ENCODE measurements at regions of chr20 and their contacts with region 1.

Region 1: GRCh38 chr20:44609511-44610312 is 27.3 kb downstream of the PKIG start:
- DNase-seq: peak; percentile 90 to 93
- H3K4me3 ChIP-seq: peak overlapping the region; percentile 28 to 38
- H3K27ac ChIP-seq: peak overlapping the region; percentile 86
- H3K4me1 ChIP-seq: peaks cover 0 to 55% (median 34%) of the 10 kb centered on the region in 4 donors
- H3K27me3 ChIP-seq: no peaks in the 10 kb centered on the region
- CTCF ChIP-seq: peak; percentile 98

Region 2: DNA sequence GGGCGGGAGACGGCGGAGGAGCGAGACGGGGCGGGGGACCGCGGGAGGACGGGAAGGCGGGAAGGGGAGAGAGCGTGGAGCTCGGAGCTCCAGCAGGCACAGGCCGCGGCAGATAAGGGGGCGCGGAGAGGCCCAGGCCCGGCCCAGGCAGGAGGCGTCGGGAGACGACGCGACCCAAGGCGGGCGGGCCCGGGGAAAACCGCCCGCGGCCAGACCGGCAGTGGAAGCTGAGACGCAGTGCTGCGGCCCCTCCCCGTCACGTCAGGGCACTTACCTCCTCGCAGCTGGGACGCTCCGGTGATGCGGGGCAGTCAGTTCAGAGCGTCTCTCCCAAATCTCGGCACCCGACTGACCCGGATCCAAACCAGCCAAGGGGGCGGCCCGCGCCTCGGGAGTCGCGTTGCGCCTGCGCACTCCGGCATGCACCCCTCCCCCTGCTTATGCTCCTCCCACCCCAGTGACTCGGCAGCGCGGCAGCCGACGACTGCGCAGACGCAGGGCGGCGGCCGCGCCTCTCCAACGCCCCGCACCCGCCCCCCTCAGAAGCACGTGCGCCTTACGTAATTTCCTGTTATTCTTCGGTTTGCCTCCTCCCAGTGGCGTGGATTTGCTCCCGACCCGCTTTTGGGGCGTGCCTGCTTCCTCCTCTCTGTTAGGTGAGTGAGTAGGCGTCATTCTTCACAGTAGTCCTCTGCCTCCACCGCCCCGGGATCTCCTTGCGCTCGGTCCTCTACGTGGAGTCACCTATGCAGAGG is 399.1 kb before region 1 on chr20 and contains the start of gene OSER1:
- intact Hi-C with region 1: loop called (anchors 10 kb)
- DNase-seq: peak; percentile 98 to 99
- H3K4me3 ChIP-seq: peak within 1 kb of the TSS; percentile 78 to 98
- H3K27ac ChIP-seq: peak within 1 kb of the TSS; percentile 96 to 99
- H3K4me1 ChIP-seq: peaks cover 0 to 52% (median 32%) of the 10 kb centered on the region in 4 donors
- H3K27me3 ChIP-seq: no peaks in the 10 kb centered on the region
- CTCF ChIP-seq: no peak

Region 3: GRCh38 chr20:44532259-44532980 is 77.3 kb before region 1 on chr20:
- intact Hi-C with region 1: loop called (anchors 5 kb)
- DNase-seq: peak in 1 of 2 donors; percentile 27
- H3K4me3 ChIP-seq: peak overlapping the region; percentile 69
- H3K27ac ChIP-seq: peak overlapping the region; percentile 57 to 78
- H3K4me1 ChIP-seq: peaks cover 0 to 17% (median 9%) of the 10 kb centered on the region in 4 donors
- H3K27me3 ChIP-seq: no peaks in the 10 kb centered on the region
- CTCF ChIP-seq: no peak

Region 4: DNA sequence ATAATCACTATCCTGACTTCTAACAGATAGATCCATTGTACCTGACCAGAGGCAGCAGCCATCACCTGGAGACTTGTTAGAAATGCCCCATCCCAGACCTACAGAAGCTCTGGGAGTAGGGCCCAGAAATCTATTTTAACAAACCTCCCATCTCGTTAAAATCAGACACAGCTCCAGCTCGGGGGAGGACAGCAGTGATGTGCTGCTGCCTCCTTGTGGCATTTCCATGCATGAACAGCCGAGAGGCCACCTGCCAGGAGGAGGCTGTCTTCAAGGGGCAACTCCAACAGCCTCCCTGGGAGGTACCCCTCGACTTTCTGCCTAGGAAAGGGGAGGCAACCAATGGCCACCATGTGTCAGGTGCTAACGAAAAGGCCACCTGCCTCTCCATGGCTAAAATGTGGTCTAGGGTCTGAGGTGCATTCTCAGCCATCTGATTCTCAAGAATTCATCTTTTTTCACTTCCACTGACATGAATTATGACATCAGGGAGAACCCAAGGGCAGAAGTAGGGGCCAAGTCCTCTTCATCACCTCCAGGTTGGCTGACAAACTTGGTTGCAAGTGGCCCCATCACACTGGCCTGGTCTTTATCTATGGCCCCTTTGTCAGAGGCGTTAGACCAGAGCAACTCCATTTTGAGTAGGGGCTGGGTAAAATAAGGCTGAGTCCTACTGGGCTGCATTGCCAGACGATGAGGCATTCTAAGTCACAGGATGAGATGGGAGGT is 123.8 kb after region 1 on chr20:
- intact Hi-C with region 1: loop called (anchors 10 kb)
- DNase-seq: peak; percentile 81 to 90
- H3K4me3 ChIP-seq: no peak overlapping the region
- H3K27ac ChIP-seq: peak overlapping the region; percentile 87 to 92
- H3K4me1 ChIP-seq: peaks cover 0 to 91% (median 50%) of the 10 kb centered on the region in 4 donors
- H3K27me3 ChIP-seq: no peaks in the 10 kb centered on the region
- CTCF ChIP-seq: peak; percentile 96 to 97

Measured in tibial artery (tissue), 4 donors.